Activated CD8-positive, alpha-beta T cell treated with anti-CD3 and anti-CD28 coated beads for 36 hours (primary cell): ENCODE measurements at regions of chr12 and their contacts with region 1.

Region 1: GRCh38 chr12:107372229-107372658 is 278.9 kb upstream of the CRY1 start:
- DNase-seq: peak; percentile 64
- ATAC-seq: peak; percentile 64
- H3K4me3 Mint-ChIP-seq: peak overlapping the region; percentile 24
- H3K27ac Mint-ChIP-seq: peak overlapping the region; percentile 98
- H3K4me1 Mint-ChIP-seq: peaks cover 73% of the 10 kb centered on the region
- H3K27me3 Mint-ChIP-seq: no peaks in the 10 kb centered on the region
- CTCF ChIP-seq: no peak

Region 2: GRCh38 chr12:107264667-107265066 is 107.6 kb before region 1 on chr12:
- CTCF ChIA-PET with region 1: no interaction called
- POLR2A ChIA-PET with region 1: no interaction called
- intact Hi-C with region 1: no loop called
- DNase-seq: peak; percentile 26
- ATAC-seq: peak; percentile 80
- H3K4me3 Mint-ChIP-seq: peak overlapping the region; percentile 1
- H3K27ac Mint-ChIP-seq: no peak overlapping the region
- H3K4me1 Mint-ChIP-seq: peaks cover 9% of the 10 kb centered on the region
- H3K27me3 Mint-ChIP-seq: no peaks in the 10 kb centered on the region
- CTCF ChIP-seq: no peak

Region 3: DNA sequence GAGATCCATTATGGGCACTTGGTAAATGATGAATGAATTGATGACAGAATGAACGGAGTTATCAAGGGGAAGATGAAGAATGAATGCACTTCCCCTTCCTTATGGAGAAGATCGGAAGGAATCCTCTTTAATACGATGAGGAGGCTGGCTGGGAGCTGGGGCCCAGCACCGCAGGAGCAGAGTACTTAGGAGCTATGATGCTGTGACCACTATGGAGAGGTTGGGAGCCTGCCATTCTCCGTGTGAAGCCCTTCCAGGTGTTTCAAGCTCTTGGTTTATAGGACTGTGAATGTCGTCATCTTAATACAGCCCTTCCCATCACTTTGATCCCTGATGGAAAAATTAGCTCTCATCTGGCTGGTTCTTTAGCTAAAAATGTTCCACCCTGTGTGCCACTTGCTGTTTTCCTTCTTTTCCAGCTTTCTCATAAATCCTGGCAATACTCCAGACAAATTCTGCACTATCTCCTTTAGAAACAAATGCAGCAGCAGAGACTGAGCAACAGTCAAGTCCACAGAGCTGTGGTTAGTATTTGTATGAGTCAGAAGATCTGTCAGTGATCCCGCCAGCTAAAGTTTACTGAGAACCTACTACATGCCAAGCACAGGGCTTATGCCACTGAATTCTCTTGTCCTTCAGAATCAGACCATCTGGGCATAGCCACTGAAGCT is 15.8 kb before region 1 on chr12:
- CTCF ChIA-PET with region 1: interaction called, 6 read pairs
- POLR2A ChIA-PET with region 1: interaction called, 6 read pairs
- intact Hi-C with region 1: loop called (anchors 2 kb)
- DNase-seq: no peak
- ATAC-seq: peak; percentile 43
- H3K4me3 Mint-ChIP-seq: no peak overlapping the region
- H3K27ac Mint-ChIP-seq: no peak overlapping the region
- H3K4me1 Mint-ChIP-seq: peaks cover 67% of the 10 kb centered on the region
- H3K27me3 Mint-ChIP-seq: no peaks in the 10 kb centered on the region
- CTCF ChIP-seq: no peak